MCF 10A (cell line): ENCODE measurements at regions of chr17 and their contacts with region 1.

Region 1: DNA sequence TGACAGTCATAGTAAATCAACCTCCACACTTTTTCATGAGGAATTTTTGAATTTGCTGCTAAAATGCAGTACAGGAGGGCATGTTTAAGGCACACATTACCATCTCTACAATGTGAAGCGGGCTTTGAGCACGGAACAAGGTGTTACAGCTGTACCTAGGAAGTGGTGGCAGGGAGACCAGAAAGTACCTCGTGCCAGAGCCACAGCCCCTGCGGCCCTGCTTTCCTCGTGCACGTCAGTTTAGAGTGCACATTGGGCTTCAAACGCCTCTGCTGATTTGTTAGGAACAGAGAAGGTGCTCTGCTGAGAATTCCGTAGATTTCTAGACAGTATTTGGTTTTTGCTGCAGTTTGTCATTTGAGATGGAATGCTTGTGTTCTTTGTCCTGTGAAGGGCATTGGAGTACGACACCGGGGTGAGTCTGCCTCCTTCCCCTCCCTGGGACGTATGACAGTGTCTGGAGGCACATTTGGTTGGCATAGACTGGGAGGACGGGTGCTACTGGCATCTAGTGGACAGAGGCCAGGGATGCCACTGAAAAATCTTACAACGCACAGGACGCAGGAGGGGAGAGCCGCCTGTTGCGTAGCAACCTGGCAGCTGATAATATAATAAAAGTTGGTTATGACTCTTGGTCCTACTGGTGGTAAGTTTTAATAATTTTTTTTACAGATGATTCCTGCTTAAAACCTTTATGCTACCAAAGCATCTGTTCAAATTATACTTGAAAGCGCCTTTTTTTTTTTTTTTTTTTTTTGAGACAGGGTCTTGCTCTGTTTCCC is 9.1 kb downstream of the FOXK2 start:
- DNase-seq: peak; percentile 95
- H3K4me3 Mint-ChIP-seq: peak overlapping the region; percentile 66
- H3K27ac Mint-ChIP-seq: peak overlapping the region; percentile 88
- H3K4me1 Mint-ChIP-seq: peaks cover 50% of the 10 kb centered on the region
- H3K27me3 Mint-ChIP-seq: no peaks in the 10 kb centered on the region
- CTCF ChIP-seq: peak; percentile 78

Region 2: GRCh38 chr17:82351716-82352488 is 176.8 kb before region 1 on chr17:
- CTCF ChIA-PET with region 1: no interaction called
- POLR2A ChIA-PET with region 1: interaction called, 6 read pairs
- intact Hi-C with region 1: loop called (anchors 10 kb)
- DNase-seq: peak; percentile 86
- H3K4me3 Mint-ChIP-seq: no peak overlapping the region
- H3K27ac Mint-ChIP-seq: no peak overlapping the region
- H3K4me1 Mint-ChIP-seq: peaks cover 15% of the 10 kb centered on the region
- H3K27me3 Mint-ChIP-seq: peaks cover 11% of the 10 kb centered on the region
- CTCF ChIP-seq: peak; percentile 94

Region 3: DNA sequence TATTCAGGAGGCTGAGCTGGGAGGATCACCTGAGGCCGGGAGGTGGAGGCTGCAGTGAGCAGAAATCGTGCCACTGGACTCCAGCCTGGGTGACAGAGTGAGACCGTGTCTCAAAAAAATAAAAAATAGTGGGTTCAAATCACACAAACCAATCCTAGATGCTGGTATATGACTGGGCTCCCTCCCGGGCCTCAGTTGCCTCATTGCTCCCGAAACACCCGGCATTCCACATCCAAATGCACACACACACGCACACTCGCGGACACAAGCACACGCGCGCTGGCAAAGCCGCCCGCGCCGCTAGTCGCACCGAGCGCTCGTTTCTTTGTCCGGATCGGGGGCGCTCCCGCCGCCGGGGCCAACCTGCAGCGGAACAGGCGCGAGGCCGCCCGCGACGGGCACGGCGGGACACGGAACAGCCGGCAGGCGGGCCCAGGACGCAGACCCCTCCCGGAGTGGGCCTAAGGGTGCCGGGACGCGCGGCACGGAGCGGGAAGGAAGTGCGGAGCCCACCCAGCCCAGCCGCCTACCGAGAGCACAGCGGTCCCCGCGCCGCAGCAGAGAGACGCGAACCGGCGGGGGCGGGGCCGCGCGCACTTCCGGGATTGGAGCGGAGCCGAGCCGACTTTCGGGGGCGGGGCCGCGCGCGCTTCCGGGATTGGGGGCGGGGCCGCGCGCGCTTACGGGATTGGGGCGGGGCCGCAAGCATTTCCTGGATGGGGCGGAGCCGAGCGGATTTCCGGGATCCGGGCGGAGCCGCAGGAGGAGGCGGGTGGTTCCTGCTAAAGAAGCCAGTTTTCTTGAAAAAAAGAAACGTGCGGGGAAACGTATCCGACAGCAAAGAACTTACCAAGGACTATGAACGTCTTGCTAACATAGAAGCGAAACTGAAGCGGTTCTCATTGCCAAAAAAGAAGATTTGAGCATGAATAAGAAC is 78.2 kb before region 1 on chr17 and contains the start of gene CYBC1:
- CTCF ChIA-PET with region 1: no interaction called
- POLR2A ChIA-PET with region 1: interaction called, 6 read pairs
- intact Hi-C with region 1: loop called (anchors 5 kb)
- DNase-seq: peak; percentile 86
- H3K4me3 Mint-ChIP-seq: peak within 1 kb of the TSS; percentile 80
- H3K27ac Mint-ChIP-seq: peak within 1 kb of the TSS; percentile 94
- H3K4me1 Mint-ChIP-seq: no peaks in the 10 kb centered on the region
- H3K27me3 Mint-ChIP-seq: no peaks in the 10 kb centered on the region
- CTCF ChIP-seq: no peak
- total RNA-seq, gene CYBC1: 38.0 and 45.4 TPM in 2 replicates

Region 4: DNA sequence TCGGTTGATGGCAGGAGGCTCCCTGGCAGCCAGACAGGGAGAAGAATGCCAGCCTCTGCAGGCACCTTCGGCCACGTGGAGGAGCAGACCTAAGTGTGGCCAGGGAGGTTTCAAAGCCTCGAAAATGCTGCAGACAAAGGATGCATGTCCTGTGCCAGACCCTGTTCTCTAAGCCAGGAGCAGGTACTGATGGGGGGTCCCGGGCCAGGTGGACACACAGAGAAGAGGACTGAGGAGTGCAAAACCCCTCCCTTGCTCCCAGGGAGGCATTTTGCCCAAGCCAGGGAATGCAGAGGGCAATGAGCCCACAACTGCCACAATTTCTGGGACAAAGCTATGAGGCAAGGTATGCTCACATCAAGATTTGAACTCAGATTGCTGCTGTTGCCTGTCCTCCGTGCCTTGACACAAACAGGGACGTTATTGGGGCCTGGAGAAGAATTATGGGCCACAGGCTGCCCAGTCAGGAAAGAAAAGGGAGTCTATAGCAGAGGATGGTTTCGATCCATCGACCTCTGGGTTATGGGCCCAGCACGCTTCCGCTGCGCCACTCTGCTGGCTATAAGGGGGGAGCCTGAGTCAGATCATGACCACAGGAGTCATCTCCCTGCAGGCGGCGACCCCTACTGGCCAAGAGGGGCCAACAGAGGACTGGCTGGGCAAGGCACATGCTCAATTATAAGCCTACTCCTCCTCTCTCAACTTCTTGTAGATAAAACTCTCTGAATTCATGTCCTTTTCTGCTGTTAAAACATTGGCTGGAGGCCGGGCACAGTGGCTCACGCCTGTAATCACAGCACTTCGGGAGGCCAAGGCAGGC is 34.2 kb before region 1 on chr17:
- CTCF ChIA-PET with region 1: interaction called, 6 read pairs
- POLR2A ChIA-PET with region 1: interaction called, 66 read pairs
- intact Hi-C with region 1: loop called (anchors 1 kb)
- DNase-seq: peak; percentile 96
- H3K4me3 Mint-ChIP-seq: no peak overlapping the region
- H3K27ac Mint-ChIP-seq: peak overlapping the region; percentile 87
- H3K4me1 Mint-ChIP-seq: peaks cover 39% of the 10 kb centered on the region
- H3K27me3 Mint-ChIP-seq: no peaks in the 10 kb centered on the region
- CTCF ChIP-seq: peak; percentile 98

Region 5: DNA sequence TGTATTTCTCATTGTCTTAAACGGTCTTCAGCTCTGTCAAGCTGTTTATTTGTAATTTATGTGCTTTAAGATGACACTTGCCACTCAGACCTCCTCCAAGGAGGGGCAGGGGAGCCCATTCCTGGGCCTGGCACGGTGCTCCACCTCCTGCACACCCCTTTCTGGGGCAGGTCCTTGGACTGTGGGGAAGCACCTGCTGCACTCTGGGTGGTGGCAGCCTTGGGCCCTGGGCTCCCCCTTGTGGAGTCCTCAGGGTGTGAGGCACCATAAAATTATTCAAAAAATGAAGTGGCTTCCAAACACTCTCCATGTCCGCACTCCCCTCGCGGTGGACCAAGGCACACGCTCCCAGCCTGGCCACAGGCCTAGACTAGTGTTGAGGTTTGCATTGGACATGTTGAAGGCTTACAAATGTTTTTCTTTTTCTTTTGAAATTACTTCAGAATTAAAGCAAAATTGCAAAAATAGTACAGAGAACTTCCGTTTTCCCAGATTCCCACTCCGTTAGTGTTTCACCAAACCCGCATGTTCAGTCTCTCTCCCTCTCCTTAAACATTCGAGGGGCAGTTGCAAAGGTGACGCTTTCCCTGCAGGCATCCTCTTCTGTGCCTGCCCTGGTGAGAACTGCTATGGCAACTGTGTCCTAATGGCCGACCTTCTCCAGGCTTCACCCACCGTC is 23.2 kb after region 1 on chr17:
- CTCF ChIA-PET with region 1: interaction called, 9 read pairs
- POLR2A ChIA-PET with region 1: interaction called, 15 read pairs
- intact Hi-C with region 1: loop called (anchors 2 kb)
- DNase-seq: peak; percentile 79
- H3K4me3 Mint-ChIP-seq: no peak overlapping the region
- H3K27ac Mint-ChIP-seq: peak overlapping the region; percentile 72
- H3K4me1 Mint-ChIP-seq: peaks cover 23% of the 10 kb centered on the region
- H3K27me3 Mint-ChIP-seq: no peaks in the 10 kb centered on the region
- CTCF ChIP-seq: peak; percentile 74